ENCODE measurements at regions of chr21 and their contacts with region 1.

Region 1: DNA sequence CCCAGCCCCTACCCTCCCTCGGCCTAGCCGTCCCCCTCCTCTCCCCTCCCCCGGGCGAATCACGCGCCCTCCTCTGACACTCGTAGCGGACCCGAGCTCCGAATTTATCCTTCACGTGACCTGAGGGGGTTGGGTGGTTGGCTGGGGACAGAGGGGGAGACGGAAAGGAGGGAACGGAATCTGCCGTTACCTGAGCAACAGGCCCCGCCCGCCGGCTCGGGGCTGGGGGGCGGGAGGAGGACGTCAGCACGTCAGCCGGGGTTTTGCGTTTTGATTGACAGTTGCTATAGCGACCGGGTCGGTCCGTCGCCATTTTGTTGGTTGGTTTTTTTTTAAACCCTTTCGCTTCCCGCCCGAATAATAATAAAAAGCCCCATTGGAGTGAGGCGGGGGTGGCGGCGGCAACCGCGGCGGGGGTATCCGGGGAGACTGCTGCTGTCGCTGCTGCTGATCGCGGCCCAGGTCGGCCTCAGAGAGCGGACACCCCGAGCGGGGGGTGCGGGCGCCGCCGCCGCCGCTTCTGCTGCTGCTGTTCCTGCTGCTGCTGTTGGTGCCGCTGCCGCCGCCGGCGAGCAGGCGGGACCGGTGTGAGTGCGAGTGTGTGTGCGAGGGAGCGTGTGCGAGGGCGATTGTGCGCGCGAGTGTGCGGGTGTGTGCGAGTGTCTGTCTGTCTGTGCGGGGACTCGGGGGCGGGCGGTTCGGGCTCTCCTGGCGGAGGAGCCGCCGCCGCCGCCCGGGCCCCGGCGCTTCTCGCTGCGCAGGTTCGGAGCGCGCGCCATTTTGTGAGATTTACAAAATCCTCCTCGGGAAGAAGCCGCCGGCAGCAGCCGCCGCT is at the start of gene DYRK1A:
- DNase-seq: peak; percentile 98 to 99 (median 99)
- H3K4me3 ChIP-seq: peak within 1 kb of the TSS; percentile 1 to 69
- H3K4me3 Mint-ChIP-seq: peak within 1 kb of the TSS; percentile 95 to 100 (median 100)
- H3K27ac ChIP-seq: peak within 1 kb of the TSS; percentile 98
- H3K27ac Mint-ChIP-seq: peak within 1 kb of the TSS; percentile 99 to 100 (median 100)
- H3K4me1 ChIP-seq: peaks cover 43% of the 10 kb centered on the region
- H3K4me1 Mint-ChIP-seq: peaks cover 32 to 61% (median 40%) of the 10 kb centered on the region in 4 donors
- H3K27me3 ChIP-seq: no peaks in the 10 kb centered on the region
- H3K27me3 Mint-ChIP-seq: peaks cover 1 to 2% of the 10 kb centered on the region in 2 donors
- total RNA-seq, gene DYRK1A: 126 to 130 TPM

Region 2: GRCh38 chr21:37072988-37073416 is 293.7 kb before region 1 on chr21 and contains the starts of genes PIGP and TTC3:
- CTCF ChIA-PET with region 1: no interaction called
- POLR2A ChIA-PET with region 1: no interaction called
- intact Hi-C with region 1: loop called (anchors 1 kb)
- DNase-seq: peak; percentile 93 to 97 (median 96)
- H3K4me3 ChIP-seq: peak within 1 kb of the TSS; percentile 83 to 91
- H3K4me3 Mint-ChIP-seq: peak within 1 kb of the TSS; percentile 95 to 100 (median 98)
- H3K27ac ChIP-seq: peak within 1 kb of the TSS; percentile 91
- H3K27ac Mint-ChIP-seq: peak within 1 kb of the TSS; percentile 92 to 100 (median 98)
- H3K4me1 ChIP-seq: peaks cover 36% of the 10 kb centered on the region
- H3K4me1 Mint-ChIP-seq: peaks cover 31 to 63% (median 44%) of the 10 kb centered on the region in 4 donors
- H3K27me3 ChIP-seq: no peaks in the 10 kb centered on the region
- H3K27me3 Mint-ChIP-seq: no peaks in the 10 kb centered on the region
- total RNA-seq, gene PIGP: 17.2 to 19.7 TPM
- total RNA-seq, gene TTC3: 163 to 171 TPM

Region 3: DNA sequence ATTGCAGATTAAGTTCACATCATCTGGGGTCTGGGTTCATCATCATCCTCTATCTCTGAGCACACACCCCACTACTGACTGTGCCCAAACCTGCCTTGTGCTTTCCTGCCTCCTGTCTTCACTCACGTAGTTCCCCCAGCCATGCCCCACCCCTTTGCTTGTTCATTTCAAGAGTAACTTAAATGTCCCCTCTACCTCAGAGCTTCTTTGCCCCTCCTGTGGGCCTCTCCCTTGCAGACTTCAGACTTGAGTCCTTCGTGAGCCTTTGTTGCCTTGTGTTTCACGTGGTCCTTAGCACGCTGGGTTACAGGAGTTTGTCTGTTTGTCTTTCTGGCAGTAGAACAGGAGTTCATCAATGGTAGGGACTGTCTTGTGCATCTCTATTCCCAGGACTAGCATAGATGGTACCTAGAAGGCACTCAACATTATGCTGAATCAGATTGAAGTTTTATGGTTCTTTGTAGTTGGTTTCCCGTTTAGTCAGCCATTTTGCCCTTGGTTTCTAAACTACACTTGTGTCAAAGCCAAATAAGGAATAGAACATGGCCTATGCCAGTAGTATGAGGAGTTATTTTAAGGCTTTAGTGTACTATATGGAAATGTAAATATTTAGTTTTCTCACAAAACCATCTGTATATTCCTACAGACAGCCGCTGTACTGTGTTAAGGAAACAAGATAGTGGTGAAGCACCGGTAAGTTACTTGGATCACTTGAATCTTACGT is 207.5 kb before region 1 on chr21:
- CTCF ChIA-PET with region 1: no interaction called
- POLR2A ChIA-PET with region 1: no interaction called
- intact Hi-C with region 1: no loop called
- DNase-seq: no peak
- H3K4me3 ChIP-seq: no peak overlapping the region
- H3K4me3 Mint-ChIP-seq: no peak overlapping the region
- H3K27ac ChIP-seq: no peak overlapping the region
- H3K27ac Mint-ChIP-seq: peak overlapping the region in 5 of 7 donors; percentile 3 to 77 (median 43)
- H3K4me1 ChIP-seq: no peaks in the 10 kb centered on the region
- H3K4me1 Mint-ChIP-seq: peaks cover 0 to 5% (median 0%) of the 10 kb centered on the region in 4 donors
- H3K27me3 ChIP-seq: no peaks in the 10 kb centered on the region
- H3K27me3 Mint-ChIP-seq: no peaks in the 10 kb centered on the region

Region 4: DNA sequence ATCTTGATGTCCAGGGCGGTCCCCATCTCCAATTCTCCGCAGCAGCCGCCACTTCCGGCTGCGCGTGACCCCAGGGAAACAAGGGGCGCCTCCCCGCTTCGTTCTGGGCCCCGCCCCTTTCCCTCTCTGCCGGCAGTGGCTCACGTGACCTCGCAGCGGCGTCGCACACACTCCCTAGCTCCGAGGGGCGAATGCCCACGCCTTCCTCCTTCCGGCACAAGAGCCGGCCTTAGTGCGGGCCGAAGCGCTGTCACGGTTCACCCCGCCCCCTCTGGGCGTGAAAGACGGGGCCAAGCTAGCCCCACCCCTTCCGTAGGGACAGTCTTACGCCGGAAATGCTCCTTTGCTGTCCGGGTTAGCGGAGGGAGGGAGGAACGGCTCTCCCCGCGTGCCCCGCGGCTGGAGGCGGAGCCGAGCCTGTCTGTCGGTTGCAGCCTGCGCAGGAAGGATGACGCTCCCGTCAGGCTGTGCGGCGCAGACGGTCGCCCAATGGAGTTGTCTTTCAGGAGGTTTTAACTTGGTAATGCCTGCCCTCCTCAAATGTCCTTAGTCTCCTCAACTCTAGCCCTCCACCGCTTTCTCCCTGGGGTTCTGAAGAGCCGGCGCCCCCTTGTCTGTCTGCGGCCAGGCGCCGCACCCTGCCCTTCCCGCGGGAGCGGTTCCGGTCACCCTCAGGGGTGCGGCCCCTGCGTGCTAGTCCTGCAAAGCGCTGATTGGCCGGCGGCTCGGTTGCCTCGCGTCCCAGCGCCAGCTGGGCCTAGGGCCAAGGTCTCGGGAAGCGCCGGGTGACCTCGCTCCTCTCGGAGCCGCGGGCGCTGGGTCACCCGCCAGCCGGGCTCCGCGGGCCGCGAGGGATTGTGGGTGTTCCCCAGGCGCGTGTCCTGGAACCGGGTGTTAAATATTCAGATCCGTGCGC is 99.2 kb before region 1 on chr21 and contains the start of gene VPS26C:
- CTCF ChIA-PET with region 1: interaction called, 4 read pairs
- POLR2A ChIA-PET with region 1: interaction called, 80 read pairs
- intact Hi-C with region 1: loop called (anchors 1 kb)
- DNase-seq: peak; percentile 97 to 99 (median 99)
- H3K4me3 ChIP-seq: peak within 1 kb of the TSS; percentile 80 to 83
- H3K4me3 Mint-ChIP-seq: peak within 1 kb of the TSS; percentile 92 to 96 (median 94)
- H3K27ac ChIP-seq: peak within 1 kb of the TSS; percentile 92
- H3K27ac Mint-ChIP-seq: peak within 1 kb of the TSS; percentile 97 to 99 (median 98)
- H3K4me1 ChIP-seq: peaks cover 43% of the 10 kb centered on the region
- H3K4me1 Mint-ChIP-seq: peaks cover 33 to 64% (median 44%) of the 10 kb centered on the region in 4 donors
- H3K27me3 ChIP-seq: no peaks in the 10 kb centered on the region
- H3K27me3 Mint-ChIP-seq: peaks cover 0 to 4% of the 10 kb centered on the region in 2 donors
- total RNA-seq, gene VPS26C: 76.0 to 79.7 TPM

Region 5: DNA sequence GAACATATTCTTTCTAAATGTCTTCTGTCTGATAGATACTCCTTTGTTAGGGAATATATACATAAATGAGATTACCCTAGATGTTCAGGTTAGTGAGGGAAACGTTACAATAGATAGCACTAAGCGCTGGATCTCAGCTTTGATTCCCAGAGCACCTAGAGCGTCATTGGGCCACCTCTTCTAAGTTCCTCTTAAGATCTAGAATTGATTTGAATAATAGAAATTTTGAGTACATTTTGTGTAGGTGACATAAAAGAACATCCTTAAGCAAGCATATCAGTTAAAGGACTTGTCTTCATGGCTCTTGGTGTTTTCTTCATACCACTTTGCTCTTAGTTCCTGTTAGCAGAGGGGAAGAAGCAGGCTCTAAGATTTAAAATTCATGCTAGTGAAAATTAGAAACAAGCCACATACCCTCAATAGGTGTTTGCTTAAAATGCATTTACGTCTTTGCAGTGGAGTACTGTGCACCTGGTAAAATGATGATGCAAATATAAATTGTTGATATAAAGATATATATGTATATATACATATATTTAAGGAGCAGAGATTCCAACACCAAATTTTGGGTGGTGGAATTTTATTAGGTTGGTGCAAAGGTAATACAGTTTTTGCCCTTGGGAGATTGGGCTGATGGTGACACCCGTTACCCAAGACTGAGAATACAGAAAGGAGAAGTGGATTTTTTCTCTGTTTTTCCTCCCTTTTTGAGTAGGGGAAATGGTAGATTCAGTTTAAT is 47.0 kb after region 1 on chr21:
- CTCF ChIA-PET with region 1: no interaction called
- POLR2A ChIA-PET with region 1: interaction called, 4 read pairs
- intact Hi-C with region 1: loop called (anchors 2 kb)
- DNase-seq: no peak
- H3K4me3 ChIP-seq: no peak overlapping the region
- H3K4me3 Mint-ChIP-seq: peak overlapping the region in 4 of 8 donors; percentile 20 to 71 (median 56)
- H3K27ac ChIP-seq: no peak overlapping the region
- H3K27ac Mint-ChIP-seq: peak overlapping the region in 5 of 7 donors; percentile 18 to 65 (median 45)
- H3K4me1 ChIP-seq: peaks cover 86% of the 10 kb centered on the region
- H3K4me1 Mint-ChIP-seq: peaks cover 68 to 89% (median 78%) of the 10 kb centered on the region in 4 donors
- H3K27me3 ChIP-seq: no peaks in the 10 kb centered on the region
- H3K27me3 Mint-ChIP-seq: no peaks in the 10 kb centered on the region

Region 6: GRCh38 chr21:37463083-37463801 is 96.5 kb after region 1 on chr21:
- CTCF ChIA-PET with region 1: interaction called, 6 read pairs
- POLR2A ChIA-PET with region 1: interaction called, 6 read pairs
- intact Hi-C with region 1: loop called (anchors 2 kb)
- DNase-seq: peak; percentile 40 to 51 (median 47)
- H3K4me3 ChIP-seq: peak overlapping the region in 1 of 2 donors; percentile 8
- H3K4me3 Mint-ChIP-seq: peak overlapping the region; percentile 6 to 79 (median 56)
- H3K27ac ChIP-seq: no peak overlapping the region
- H3K27ac Mint-ChIP-seq: peak overlapping the region in 6 of 7 donors; percentile 60 to 94 (median 78)
- H3K4me1 ChIP-seq: peaks cover 65% of the 10 kb centered on the region
- H3K4me1 Mint-ChIP-seq: peaks cover 58 to 87% (median 74%) of the 10 kb centered on the region in 4 donors
- H3K27me3 ChIP-seq: no peaks in the 10 kb centered on the region
- H3K27me3 Mint-ChIP-seq: no peaks in the 10 kb centered on the region

Region 7: DNA sequence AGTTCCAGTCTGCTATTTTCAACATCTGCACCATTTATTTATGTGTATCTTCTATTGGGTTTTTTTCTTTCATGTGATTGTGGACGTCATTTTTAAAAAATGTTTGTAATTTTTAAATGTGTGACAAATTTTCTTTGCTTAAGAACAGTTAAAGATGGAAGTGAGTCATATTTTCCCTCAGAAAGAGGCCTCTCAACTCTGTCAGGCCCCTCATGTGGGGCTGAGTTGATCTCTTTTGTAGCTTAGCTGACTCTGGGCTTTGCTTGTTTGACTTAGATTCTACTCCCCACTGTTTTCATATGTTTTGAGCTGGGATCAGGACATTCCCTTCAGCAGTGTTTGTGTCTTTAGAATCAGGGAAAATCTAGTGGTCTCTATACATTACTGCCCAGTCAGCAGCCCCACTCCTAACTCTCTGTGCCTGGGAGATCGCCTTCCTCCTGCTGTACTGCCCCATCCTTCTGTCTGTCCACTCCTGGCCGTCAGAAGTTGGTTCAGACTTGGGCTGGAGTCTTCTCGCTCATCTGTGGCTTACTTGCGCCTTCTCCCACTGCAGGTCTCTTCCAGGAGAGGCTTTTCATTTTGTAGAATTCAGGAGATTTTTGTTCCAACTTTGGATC is 137.3 kb after region 1 on chr21:
- CTCF ChIA-PET with region 1: no interaction called
- POLR2A ChIA-PET with region 1: no interaction called
- intact Hi-C with region 1: no loop called
- DNase-seq: no peak
- H3K4me3 ChIP-seq: no peak overlapping the region
- H3K4me3 Mint-ChIP-seq: no peak overlapping the region
- H3K27ac ChIP-seq: no peak overlapping the region
- H3K27ac Mint-ChIP-seq: peak overlapping the region in 5 of 7 donors; percentile 37 to 83 (median 59)
- H3K4me1 ChIP-seq: no peaks in the 10 kb centered on the region
- H3K4me1 Mint-ChIP-seq: peaks cover 13 to 23% (median 15%) of the 10 kb centered on the region in 4 donors
- H3K27me3 ChIP-seq: no peaks in the 10 kb centered on the region
- H3K27me3 Mint-ChIP-seq: no peaks in the 10 kb centered on the region

Region 8: GRCh38 chr21:39313571-39314142 is 1947.0 kb after region 1 on chr21 and contains the start of gene BRWD1:
- CTCF ChIA-PET with region 1: no interaction called
- POLR2A ChIA-PET with region 1: no interaction called
- intact Hi-C with region 1: loop called (anchors 10 kb)
- DNase-seq: peak; percentile 80 to 87 (median 86)
- H3K4me3 ChIP-seq: peak within 1 kb of the TSS; percentile 33 to 85
- H3K4me3 Mint-ChIP-seq: peak within 1 kb of the TSS; percentile 85 to 95 (median 92)
- H3K27ac ChIP-seq: peak within 1 kb of the TSS; percentile 74
- H3K27ac Mint-ChIP-seq: peak within 1 kb of the TSS; percentile 92 to 99 (median 95)
- H3K4me1 ChIP-seq: peaks cover 35% of the 10 kb centered on the region
- H3K4me1 Mint-ChIP-seq: peaks cover 33 to 53% (median 40%) of the 10 kb centered on the region in 4 donors
- H3K27me3 ChIP-seq: no peaks in the 10 kb centered on the region
- H3K27me3 Mint-ChIP-seq: peaks cover 0 to 2% of the 10 kb centered on the region in 2 donors
- total RNA-seq, gene BRWD1: 92.9 to 99.0 TPM

Measured in CD4-positive, alpha-beta memory T cell (primary cell).